ENCODE measurements at regions of chr12 and their contacts with region 1.

Region 1: DNA sequence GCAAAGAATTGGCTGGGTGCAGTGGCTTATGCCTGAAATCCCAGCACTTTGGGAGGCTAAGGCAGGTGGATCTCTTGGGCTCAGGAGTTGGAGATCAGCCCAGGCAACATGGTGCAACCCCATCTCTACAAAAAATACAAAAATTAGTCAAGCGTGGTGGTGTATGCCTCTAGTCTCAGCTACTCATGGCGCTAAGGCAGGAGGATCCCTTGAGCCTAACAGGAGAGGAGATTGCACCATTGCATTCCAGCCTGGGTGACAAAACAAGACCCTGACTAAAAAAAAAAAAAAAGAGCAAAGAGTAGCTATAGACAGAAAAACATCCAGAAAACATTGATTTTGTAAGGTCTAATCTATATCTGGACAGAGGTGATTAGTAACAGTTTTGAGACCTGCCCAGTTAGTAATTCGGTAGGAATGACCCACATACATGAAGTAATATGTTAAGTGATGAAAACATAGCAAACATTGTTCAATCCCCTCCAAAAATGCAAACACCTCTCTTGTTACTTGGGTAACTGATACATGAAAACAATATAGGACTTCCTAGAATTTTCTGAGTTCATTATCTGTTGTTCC is 24.9 kb downstream of the KIF21A start:
- DNase-seq: no peak
- H3K4me3 ChIP-seq: no peak overlapping the region
- H3K27ac ChIP-seq: no peak overlapping the region
- H3K4me1 ChIP-seq: no peaks in the 10 kb centered on the region
- H3K27me3 ChIP-seq: no peaks in the 10 kb centered on the region
- CTCF ChIP-seq: no peak

Region 2: DNA sequence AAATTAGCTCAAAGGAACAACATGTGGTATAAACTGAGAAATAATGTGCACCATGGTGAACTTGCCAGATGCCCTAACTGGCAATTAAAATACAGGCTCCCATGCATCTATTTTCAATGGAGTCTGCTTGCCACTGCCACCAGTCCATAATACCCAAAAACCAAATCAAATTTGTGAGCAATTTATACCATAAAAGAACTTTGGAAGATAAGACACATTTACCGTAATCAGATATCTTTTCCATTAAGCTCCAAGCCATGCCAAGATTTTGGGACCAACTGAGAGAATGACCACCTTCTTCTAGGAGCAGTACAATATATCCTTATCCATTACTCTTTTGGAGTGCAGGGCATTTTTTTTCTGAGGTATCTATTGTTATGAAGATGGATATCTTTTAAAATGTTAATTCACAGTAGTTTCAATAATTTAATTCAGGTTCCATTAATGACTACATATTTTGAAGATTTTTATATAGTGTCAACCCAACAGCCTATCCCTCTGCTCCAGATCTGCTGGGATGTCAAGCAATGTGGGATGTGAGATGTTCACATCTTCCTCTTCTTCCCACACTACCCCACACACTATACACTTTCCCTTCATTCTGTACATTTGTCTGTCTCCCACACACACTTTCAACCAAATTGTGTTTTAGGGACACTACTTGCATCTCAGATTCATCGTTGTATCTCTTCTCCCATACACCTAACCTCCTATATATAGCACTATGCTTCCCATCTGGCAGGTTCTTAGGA is 28.4 kb before region 1 on chr12:
- CTCF ChIA-PET with region 1: no interaction called
- dilution Hi-C with region 1: no loop called
- in situ Hi-C with region 1: no loop called
- intact Hi-C with region 1: loop called (anchors 1 kb)
- DNase-seq: no peak
- H3K4me3 ChIP-seq: no peak overlapping the region
- H3K27ac ChIP-seq: no peak overlapping the region
- H3K4me1 ChIP-seq: peaks cover 7% of the 10 kb centered on the region
- H3K27me3 ChIP-seq: no peaks in the 10 kb centered on the region
- CTCF ChIP-seq: no peak

Region 3: DNA sequence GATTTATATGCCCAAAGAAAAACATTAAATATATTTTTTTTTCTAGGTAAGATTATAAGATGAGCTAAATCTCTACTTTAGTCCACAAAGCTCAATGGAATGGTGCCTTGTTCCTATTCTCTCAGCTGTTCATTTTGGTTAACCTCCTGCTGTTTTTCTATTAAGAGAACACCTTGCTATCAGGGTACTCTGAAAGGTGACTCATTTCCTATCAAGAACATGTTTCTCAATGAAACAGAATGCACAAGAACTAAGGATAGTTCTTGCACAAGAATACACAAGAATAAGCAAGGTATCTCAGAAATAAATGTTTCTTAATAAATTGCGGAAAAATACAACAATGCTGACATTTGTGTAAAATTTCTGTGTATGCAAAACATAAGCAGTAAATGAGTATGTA is 187.5 kb after region 1 on chr12:
- CTCF ChIA-PET with region 1: no interaction called
- dilution Hi-C with region 1: no loop called
- in situ Hi-C with region 1: no loop called
- intact Hi-C with region 1: no loop called
- DNase-seq: peak; percentile 73
- H3K4me3 ChIP-seq: peak overlapping the region in 2 of 3 experiments; percentile 23 to 52
- H3K27ac ChIP-seq: peak overlapping the region; percentile 68
- H3K4me1 ChIP-seq: peaks cover 21% of the 10 kb centered on the region
- H3K27me3 ChIP-seq: no peaks in the 10 kb centered on the region
- CTCF ChIP-seq: no peak